OCI-LY7 (cell line): ENCODE measurements at regions of chr12 and their contacts with region 1.

Region 1: GRCh38 chr12:32467959-32468863 is 68.9 kb downstream of the FGD4 start:
- DNase-seq: peak; percentile 80
- H3K4me3 ChIP-seq: peak overlapping the region; percentile 52
- H3K27ac ChIP-seq: peak overlapping the region; percentile 94
- H3K4me1 ChIP-seq: peaks cover 45% of the 10 kb centered on the region
- CTCF ChIP-seq: no peak

Region 2: DNA sequence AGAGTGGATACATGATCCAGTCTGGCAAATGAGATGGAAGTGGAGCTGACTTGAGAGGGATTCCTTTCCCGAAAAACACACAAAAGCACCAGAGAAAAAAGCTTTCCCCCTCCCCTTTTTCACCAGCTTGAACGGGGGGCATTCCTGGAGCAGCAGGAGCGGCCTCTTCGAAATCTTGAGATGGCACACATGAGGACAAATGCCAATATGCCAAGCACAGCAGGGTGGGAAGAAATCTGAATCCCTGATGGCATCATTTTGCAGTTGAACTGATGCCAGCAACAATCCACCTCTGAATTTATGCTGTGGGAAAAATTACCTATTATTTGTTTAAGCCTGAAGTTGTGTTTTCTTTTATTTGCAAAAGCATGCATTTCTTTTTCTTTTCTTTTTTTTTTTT is 391.3 kb before region 1 on chr12:
- CTCF ChIA-PET with region 1: no interaction called
- POLR2A ChIA-PET with region 1: no interaction called
- intact Hi-C with region 1: no loop called
- DNase-seq: no peak
- H3K4me3 ChIP-seq: no peak overlapping the region
- H3K27ac ChIP-seq: no peak overlapping the region
- H3K4me1 ChIP-seq: no peaks in the 10 kb centered on the region
- CTCF ChIP-seq: no peak

Region 3: DNA sequence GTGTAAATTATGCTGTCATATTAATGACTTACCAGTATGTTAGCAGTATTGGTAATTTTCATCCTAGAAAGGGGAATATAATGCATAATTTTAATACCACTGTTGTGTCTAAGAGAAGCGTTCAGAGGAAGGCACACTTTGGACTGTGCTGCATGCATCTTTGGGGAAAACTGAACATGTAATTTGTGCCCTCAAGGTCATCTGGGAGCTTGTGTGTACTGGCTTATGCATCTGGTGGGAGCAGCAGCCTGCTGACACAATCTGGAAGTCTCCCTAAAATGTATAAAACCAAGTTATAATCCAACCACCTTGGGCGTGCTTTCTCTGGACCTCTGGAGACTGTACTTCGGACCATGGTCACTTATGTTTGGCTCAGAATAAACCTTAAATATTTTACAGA is 54.8 kb before region 1 on chr12:
- CTCF ChIA-PET with region 1: no interaction called
- POLR2A ChIA-PET with region 1: no interaction called
- intact Hi-C with region 1: no loop called
- DNase-seq: no peak
- H3K4me3 ChIP-seq: no peak overlapping the region
- H3K27ac ChIP-seq: no peak overlapping the region
- H3K4me1 ChIP-seq: no peaks in the 10 kb centered on the region
- CTCF ChIP-seq: no peak

Region 4: DNA sequence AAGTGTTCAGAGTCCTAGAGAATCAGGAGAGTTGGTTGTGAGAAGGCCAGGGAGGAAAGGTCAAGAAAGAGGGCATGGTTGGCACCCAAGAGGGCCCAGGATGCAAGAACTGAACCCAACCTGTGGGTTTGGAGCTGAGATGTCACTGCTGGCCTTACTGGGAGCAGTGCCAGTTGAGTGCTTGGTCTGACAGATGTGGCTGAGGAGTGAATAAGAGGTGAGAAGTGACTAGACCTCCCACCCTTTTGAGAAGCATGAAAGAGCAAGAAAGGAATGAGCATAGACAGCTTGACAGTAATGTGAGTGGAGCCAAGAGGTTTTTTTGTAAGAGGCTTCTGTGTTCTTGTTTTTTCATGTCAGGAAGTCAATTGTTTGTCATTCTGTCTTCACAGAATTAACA is 26.4 kb after region 1 on chr12:
- CTCF ChIA-PET with region 1: no interaction called
- POLR2A ChIA-PET with region 1: interaction called, 21 read pairs
- intact Hi-C with region 1: no loop called
- DNase-seq: peak; percentile 30
- H3K4me3 ChIP-seq: no peak overlapping the region
- H3K27ac ChIP-seq: peak overlapping the region; percentile 36
- H3K4me1 ChIP-seq: peaks cover 71% of the 10 kb centered on the region
- CTCF ChIP-seq: no peak

Region 5: DNA sequence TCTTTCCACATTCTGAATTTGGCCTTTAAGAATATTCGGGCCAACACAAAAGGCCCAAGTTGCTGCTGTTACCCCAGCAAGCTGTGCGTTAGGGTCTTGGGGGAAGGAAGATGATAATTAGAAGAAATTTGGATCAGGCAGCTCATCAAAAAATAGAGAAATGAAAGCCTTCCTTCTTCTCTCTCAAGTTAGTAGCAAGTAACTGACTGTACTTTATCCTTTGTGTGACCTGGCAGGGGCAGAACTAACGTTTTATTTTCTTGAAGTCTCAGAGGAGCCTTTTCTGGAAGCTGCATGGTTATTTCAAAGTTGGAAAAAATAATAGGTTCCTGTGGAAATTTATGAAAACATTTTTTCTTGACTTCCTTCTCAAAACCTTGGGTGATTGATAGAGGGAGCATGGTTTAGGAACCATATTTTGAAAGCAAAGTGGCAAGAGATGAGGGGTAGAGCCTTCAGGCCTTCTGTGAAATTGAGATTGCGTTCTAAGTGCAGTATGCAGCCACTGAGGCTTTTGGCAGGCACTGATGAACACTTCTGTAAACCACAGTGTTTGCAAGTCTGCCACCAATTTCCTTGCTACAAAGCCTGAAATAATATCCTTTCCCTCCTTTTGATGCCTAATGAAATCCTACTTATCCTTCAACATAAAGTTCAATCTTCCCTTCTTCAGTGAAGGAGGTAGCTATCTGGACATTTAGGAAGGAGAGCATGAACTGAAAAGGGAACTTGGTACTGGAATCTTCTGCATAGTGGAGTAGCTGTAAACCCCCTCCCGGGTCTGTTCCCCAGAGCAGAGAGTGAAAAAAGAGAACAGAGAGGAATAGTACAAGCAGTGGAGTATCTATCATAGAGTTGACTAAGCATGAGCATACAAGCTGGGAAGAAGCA is 54.4 kb after region 1 on chr12:
- CTCF ChIA-PET with region 1: no interaction called
- POLR2A ChIA-PET with region 1: interaction called, 14 read pairs
- intact Hi-C with region 1: no loop called
- DNase-seq: peak; percentile 75
- H3K4me3 ChIP-seq: peak overlapping the region; percentile 47
- H3K27ac ChIP-seq: peak overlapping the region; percentile 92
- H3K4me1 ChIP-seq: peaks cover 67% of the 10 kb centered on the region
- CTCF ChIP-seq: no peak